Transverse colon (tissue), 4 donors: ENCODE measurements at regions of chr6 and their contacts with region 1.

Region 1: GRCh38 chr6:2344319-2344905 is 99.0 kb upstream of the GMDS start:
- DNase-seq: no peak
- H3K4me3 ChIP-seq: no peak overlapping the region
- H3K27ac ChIP-seq: no peak overlapping the region
- H3K4me1 ChIP-seq: no peaks in the 10 kb centered on the region
- H3K27me3 ChIP-seq: no peaks in the 10 kb centered on the region
- CTCF ChIP-seq: no peak
- EP300 ChIP-seq: no peak
- POLR2A ChIP-seq: no peak

Region 2: GRCh38 chr6:2209226-2209809 is 135.1 kb before region 1 on chr6:
- in situ Hi-C with region 1: loop called in 1 of 4 experiments (anchors 25 kb)
- intact Hi-C with region 1: no loop called
- DNase-seq: peak; percentile 77
- H3K4me3 ChIP-seq: no peak overlapping the region
- H3K27ac ChIP-seq: no peak overlapping the region
- H3K4me1 ChIP-seq: no peaks in the 10 kb centered on the region
- H3K27me3 ChIP-seq: no peaks in the 10 kb centered on the region
- CTCF ChIP-seq: peak; percentile 26 to 75 (median 59)
- EP300 ChIP-seq: no peak
- POLR2A ChIP-seq: no peak

Region 3: DNA sequence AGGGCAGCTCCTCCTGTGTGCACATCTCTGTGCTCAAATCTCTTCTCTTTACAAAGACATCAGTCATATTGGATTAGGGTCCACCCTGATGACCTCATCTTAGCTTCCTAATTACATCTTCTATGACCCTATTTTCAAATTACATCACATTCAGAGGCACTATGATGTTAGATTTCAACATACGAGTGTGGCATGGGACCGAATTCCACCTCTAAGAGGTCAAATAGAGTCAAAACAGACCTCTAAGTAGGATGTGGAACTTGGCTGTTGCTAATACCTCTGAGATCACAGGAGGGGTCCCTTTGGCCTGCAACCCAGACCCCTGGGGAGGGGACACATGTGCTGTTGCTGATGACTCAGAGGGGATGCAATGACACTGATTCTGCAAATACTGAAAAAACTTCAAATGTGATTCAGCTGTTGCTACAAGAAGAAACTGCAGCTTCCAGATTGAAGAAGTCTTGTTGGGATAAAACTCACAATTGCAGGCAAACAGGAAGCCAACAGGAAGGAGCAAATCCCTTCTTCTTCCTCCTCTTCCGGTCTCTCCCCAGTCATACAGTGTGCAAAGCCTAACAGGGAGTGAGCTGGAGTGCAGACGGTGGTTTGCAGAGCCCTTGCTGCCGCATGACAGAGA is 190.1 kb after region 1 on chr6:
- in situ Hi-C with region 1: no loop called
- intact Hi-C with region 1: no loop called
- DNase-seq: no peak
- H3K4me3 ChIP-seq: no peak overlapping the region
- H3K27ac ChIP-seq: no peak overlapping the region
- H3K4me1 ChIP-seq: no peaks in the 10 kb centered on the region
- H3K27me3 ChIP-seq: peaks cover 7% of the 10 kb centered on the region
- CTCF ChIP-seq: no peak
- EP300 ChIP-seq: no peak
- POLR2A ChIP-seq: no peak